Natural killer cell (primary cell): ENCODE measurements at regions of chr15 and their contacts with region 1.

Region 1: GRCh38 chr15:78034495-78035191 is 42.9 kb downstream of the TBC1D2B start:
- DNase-seq: peak; percentile 52 to 90
- ATAC-seq: peak; percentile 75 to 82 (median 81)
- H3K4me3 ChIP-seq: no peak overlapping the region
- H3K4me3 Mint-ChIP-seq: peak overlapping the region; percentile 79
- H3K27ac ChIP-seq: peak overlapping the region; percentile 82
- H3K27ac Mint-ChIP-seq: peak overlapping the region; percentile 92 to 96
- H3K4me1 ChIP-seq: peaks cover 52% of the 10 kb centered on the region
- H3K4me1 Mint-ChIP-seq: peaks cover 47 to 71% of the 10 kb centered on the region in 2 donors
- H3K27me3 ChIP-seq: no peaks in the 10 kb centered on the region
- H3K27me3 Mint-ChIP-seq: no peaks in the 10 kb centered on the region
- CTCF ChIP-seq: no peak

Region 2: GRCh38 chr15:78000091-78000926 is 34.3 kb before region 1 on chr15:
- intact Hi-C with region 1: no loop called
- DNase-seq: peak; percentile 66 to 88
- ATAC-seq: peak; percentile 93 to 100 (median 98)
- H3K4me3 ChIP-seq: no peak overlapping the region
- H3K4me3 Mint-ChIP-seq: no peak overlapping the region
- H3K27ac ChIP-seq: no peak overlapping the region
- H3K27ac Mint-ChIP-seq: peak overlapping the region in 1 of 2 donors; percentile 83
- H3K4me1 ChIP-seq: no peaks in the 10 kb centered on the region
- H3K4me1 Mint-ChIP-seq: peaks cover 6 to 12% of the 10 kb centered on the region in 2 donors
- H3K27me3 ChIP-seq: no peaks in the 10 kb centered on the region
- H3K27me3 Mint-ChIP-seq: no peaks in the 10 kb centered on the region
- CTCF ChIP-seq: peak; percentile 42

Region 3: DNA sequence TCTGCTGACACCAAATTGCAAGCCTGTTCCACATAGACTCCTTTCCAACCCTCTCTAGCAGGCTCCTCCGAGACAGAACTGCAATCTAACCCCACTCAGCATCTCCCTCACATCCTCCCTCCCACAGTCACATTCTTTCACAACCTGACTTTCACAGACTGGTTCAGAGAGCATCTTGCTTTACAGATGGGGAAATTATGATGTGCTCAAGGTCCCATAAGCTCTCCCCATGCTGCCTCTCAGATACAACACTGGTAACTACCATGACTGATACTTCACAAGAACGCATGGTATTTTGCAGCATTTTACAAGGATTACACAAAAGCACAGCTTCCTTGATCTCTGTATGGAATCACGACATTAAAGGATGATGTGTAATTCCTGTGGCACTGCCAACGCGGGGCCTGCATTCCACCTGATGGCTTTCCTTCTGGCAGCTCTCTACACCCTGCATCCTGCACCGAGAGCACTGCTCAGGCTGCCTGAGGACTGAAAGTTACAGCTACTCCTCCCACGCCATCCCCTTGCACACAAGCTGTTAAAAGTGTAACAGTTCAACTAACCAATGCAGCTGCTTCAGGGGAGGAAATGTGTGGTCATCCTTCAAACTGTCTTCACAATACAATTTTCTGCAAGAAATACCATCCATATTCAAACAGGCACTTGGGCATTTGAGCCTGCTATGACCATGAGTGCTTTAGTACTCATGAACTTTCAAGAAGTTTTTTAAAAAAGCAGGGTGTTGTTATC is 15.2 kb after region 1 on chr15:
- intact Hi-C with region 1: loop called (anchors 1 kb)
- DNase-seq: peak; percentile 51 to 74
- ATAC-seq: peak; percentile 50 to 77 (median 67)
- H3K4me3 ChIP-seq: no peak overlapping the region
- H3K4me3 Mint-ChIP-seq: peak overlapping the region; percentile 86
- H3K27ac ChIP-seq: peak overlapping the region; percentile 63
- H3K27ac Mint-ChIP-seq: peak overlapping the region; percentile 96 to 98
- H3K4me1 ChIP-seq: peaks cover 69% of the 10 kb centered on the region
- H3K4me1 Mint-ChIP-seq: peaks cover 78 to 79% of the 10 kb centered on the region in 2 donors
- H3K27me3 ChIP-seq: no peaks in the 10 kb centered on the region
- H3K27me3 Mint-ChIP-seq: no peaks in the 10 kb centered on the region
- CTCF ChIP-seq: no peak

Region 4: GRCh38 chr15:78065284-78065872 is 30.7 kb after region 1 on chr15:
- intact Hi-C with region 1: loop called (anchors 2 kb)
- DNase-seq: peak in 1 of 2 donors; percentile 55
- ATAC-seq: peak in 2 of 3 donors; percentile 11 to 41
- H3K4me3 ChIP-seq: no peak overlapping the region
- H3K4me3 Mint-ChIP-seq: no peak overlapping the region
- H3K27ac ChIP-seq: peak overlapping the region; percentile 54
- H3K27ac Mint-ChIP-seq: no peak overlapping the region
- H3K4me1 ChIP-seq: peaks cover 60% of the 10 kb centered on the region
- H3K4me1 Mint-ChIP-seq: peaks cover 14 to 15% of the 10 kb centered on the region in 2 donors
- H3K27me3 ChIP-seq: no peaks in the 10 kb centered on the region
- H3K27me3 Mint-ChIP-seq: no peaks in the 10 kb centered on the region
- CTCF ChIP-seq: no peak

Region 5: GRCh38 chr15:78077058-78077877 is 42.6 kb after region 1 on chr15 and contains the start of gene TBC1D2B:
- intact Hi-C with region 1: loop called (anchors 1 kb)
- DNase-seq: peak; percentile 59 to 87
- ATAC-seq: peak; percentile 86 to 91 (median 88)
- H3K4me3 ChIP-seq: peak within 1 kb of the TSS; percentile 86
- H3K4me3 Mint-ChIP-seq: peak within 1 kb of the TSS; percentile 98
- H3K27ac ChIP-seq: peak within 1 kb of the TSS; percentile 73
- H3K27ac Mint-ChIP-seq: peak within 1 kb of the TSS; percentile 80 to 92
- H3K4me1 ChIP-seq: peaks cover 30% of the 10 kb centered on the region
- H3K4me1 Mint-ChIP-seq: peaks cover 36 to 41% of the 10 kb centered on the region in 2 donors
- H3K27me3 ChIP-seq: no peaks in the 10 kb centered on the region
- H3K27me3 Mint-ChIP-seq: no peaks in the 10 kb centered on the region
- CTCF ChIP-seq: no peak
- total RNA-seq, gene TBC1D2B: 54.0 to 83.5 (median 56.7) TPM

Region 6: GRCh38 chr15:78087951-78088772 is 53.5 kb after region 1 on chr15:
- intact Hi-C with region 1: no loop called
- DNase-seq: no peak
- ATAC-seq: no peak
- H3K4me3 ChIP-seq: no peak overlapping the region
- H3K4me3 Mint-ChIP-seq: no peak overlapping the region
- H3K27ac ChIP-seq: no peak overlapping the region
- H3K27ac Mint-ChIP-seq: no peak overlapping the region
- H3K4me1 ChIP-seq: peaks cover 16% of the 10 kb centered on the region
- H3K4me1 Mint-ChIP-seq: peaks cover 0 to 5% of the 10 kb centered on the region in 2 donors
- H3K27me3 ChIP-seq: no peaks in the 10 kb centered on the region
- H3K27me3 Mint-ChIP-seq: peaks cover 0 to 3% of the 10 kb centered on the region in 2 donors
- CTCF ChIP-seq: no peak